Thyroid gland (tissue), 4 donors: ENCODE measurements at regions of chr5 and their contacts with region 1.

Region 1: DNA sequence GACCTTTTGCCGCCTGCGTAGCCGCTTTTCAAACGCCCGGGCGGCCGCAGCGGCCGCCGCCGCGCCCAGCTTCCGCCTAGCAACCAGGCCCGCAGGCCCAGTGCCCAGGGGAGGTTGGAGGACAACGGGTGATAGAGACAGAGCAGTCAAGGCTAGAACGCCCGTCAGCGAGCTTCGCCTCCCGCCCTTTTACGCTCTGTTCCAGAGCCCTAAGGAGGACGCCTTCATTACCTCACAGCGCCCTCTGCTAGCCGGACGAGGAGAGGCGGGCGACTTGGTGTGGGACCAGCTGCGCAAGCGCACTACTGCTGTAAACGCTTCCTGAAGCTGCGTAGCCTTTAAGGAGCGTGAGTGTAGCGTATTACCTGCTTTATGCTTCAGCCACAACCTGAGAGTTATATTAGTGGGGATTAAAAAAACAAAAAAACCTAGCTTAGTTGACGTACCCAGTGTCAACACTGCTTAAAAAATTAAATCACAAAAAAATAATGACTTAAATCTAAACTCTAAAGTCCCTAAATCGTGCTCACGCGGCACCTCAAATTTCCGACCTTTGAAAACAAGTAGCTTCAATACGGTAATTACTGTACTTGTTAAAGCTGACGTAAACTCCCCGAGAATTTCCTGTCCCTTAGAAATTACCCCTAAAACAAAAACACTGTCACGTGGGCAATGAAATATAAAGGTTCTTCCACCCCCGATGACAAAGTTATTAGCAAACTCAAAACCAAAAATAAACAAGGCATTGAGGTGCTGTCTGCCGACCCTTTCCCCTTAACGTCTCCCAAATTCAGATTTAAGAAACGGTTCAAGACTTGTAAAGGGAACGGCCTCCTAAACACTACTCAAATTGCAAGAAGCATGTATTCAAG is at the start of gene CEP120:
- DNase-seq: peak; percentile 99
- H3K4me3 ChIP-seq: peak within 1 kb of the TSS; percentile 38 to 75 (median 52)
- H3K27ac ChIP-seq: peak within 1 kb of the TSS; percentile 54 to 94 (median 85)
- H3K4me1 ChIP-seq: peaks cover 11 to 18% of the 10 kb centered on the region in 2 donors
- H3K27me3 ChIP-seq: no peaks in the 10 kb centered on the region
- CTCF ChIP-seq: peak; percentile 25 to 79 (median 69)
- POLR2A ChIP-seq: peak in 1 of 2 donors; percentile 93
- total RNA-seq, gene CEP120: 21.7 to 32.0 (median 23.6) TPM

Region 2: GRCh38 chr5:123474228-123474627 is 50.7 kb after region 1 on chr5:
- intact Hi-C with region 1: no loop called
- DNase-seq: no peak
- H3K4me3 ChIP-seq: no peak overlapping the region
- H3K27ac ChIP-seq: no peak overlapping the region
- H3K4me1 ChIP-seq: no peaks in the 10 kb centered on the region
- H3K27me3 ChIP-seq: no peaks in the 10 kb centered on the region
- CTCF ChIP-seq: no peak
- POLR2A ChIP-seq: no peak

Region 3: DNA sequence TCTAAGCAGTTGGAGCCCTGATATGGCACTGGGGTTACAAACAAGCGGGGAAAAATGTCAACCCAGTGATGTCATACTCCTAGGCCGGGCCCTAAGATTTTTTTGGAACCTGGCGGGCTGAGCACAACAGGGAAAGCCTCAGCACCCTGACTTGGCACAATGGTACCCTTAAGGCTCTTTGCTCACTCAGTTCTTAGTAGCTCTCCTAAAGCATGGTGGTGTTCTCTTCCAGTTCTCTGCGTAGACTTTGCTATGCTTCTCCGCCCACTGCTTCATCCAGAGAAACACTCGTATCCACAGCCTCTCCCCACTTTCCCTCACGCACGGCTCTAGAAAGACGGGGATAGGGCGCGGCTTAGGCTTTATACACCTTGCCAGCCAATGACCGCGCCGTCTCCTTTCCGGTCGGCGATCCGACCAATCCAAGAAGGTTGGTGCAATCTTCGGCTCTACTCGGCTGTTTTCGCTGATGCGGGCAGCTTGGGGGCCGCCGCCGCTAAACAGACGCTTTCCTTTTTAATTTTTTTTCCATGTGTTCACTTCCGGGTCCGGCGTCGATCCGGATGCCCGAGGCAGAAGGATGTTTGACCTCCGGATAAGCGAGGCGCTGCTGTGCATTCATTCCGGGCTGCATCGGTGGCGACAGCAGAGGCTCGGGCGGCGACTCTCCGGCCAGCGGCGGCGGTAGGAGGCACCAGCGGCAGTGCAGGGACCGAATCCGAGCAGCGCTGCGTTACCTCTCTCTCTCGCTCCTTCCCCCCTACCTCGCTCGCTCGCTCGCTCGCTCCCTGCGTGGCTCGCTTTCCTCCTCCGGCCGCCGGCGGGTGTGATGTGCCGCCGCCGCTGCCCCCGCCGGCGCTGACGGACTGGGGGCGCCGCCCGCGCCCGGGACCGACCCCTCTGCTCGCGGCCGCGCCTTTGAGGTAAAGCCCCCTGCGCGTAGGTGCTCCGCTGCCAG is 88.4 kb after region 1 on chr5 and contains the start of gene CSNK1G3:
- intact Hi-C with region 1: loop called (anchors 10 kb)
- DNase-seq: peak; percentile 96 to 97
- H3K4me3 ChIP-seq: peak within 1 kb of the TSS; percentile 51 to 83 (median 77)
- H3K27ac ChIP-seq: peak within 1 kb of the TSS; percentile 75 to 91 (median 85)
- H3K4me1 ChIP-seq: peaks cover 6 to 8% of the 10 kb centered on the region in 2 donors
- H3K27me3 ChIP-seq: no peaks in the 10 kb centered on the region
- CTCF ChIP-seq: no peak
- POLR2A ChIP-seq: peak in 1 of 2 donors; percentile 93
- total RNA-seq, gene CSNK1G3: 43.5 to 60.0 (median 53.2) TPM